GM12878 (cell line): ENCODE measurements at regions of chr6 and their contacts with region 1.

Region 1: DNA sequence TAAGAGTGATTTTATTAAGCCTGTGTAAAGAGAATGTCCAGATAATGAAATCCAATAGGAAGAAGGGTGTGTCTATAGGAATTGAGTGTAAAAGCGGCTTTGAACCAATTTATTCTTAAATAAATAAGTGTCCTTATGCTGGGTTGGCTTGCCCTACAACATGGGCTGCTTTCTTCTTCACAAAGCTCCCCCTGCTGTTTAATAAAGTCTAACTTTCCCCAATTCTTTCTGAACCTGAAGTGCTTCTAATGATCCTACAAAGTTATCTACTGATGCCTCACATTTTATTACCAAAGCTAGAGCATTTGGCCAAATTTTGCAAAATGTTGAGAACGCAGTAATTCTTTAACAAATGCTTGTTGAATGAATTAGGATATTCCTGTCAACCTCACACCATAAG is 36.3 kb upstream of the SIRT5 start:
- DNase-seq: no peak
- ATAC-seq: peak; percentile 80
- H3K4me3 ChIP-seq: no peak overlapping the region
- H3K27ac ChIP-seq: no peak overlapping the region
- H3K4me1 ChIP-seq: no peaks in the 10 kb centered on the region
- H3K27me3 ChIP-seq: no peaks in the 10 kb centered on the region
- CTCF ChIP-seq: peak; percentile 27 to 49 (median 36); a peak in 4 of 6 replicates
- EP300 ChIP-seq: no peak
- POLR2A ChIP-seq: no peak
- RAD21 ChIP-seq: peak; percentile 61

Region 2: DNA sequence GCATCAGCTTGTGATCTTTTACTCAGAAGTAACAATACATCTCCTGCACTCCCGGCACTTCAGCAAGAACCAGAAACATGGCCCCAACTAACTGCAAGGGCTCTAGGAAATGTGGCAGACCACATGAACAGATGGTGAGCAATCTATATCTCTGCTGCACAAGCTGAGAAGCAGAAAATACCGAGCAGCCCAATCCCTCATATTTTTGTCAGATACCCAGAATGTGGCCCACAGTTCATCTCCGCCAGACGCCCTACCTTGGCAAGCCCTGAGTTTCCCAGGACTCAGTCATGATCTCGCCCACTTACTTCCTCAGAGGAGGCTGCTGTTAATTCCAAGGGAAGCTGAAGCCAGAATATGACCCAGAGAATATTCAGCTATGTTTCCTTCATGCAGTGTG is 884.6 kb before region 1 on chr6:
- CTCF ChIA-PET with region 1: no interaction called
- POLR2A ChIA-PET with region 1: no interaction called
- RAD21 ChIA-PET with region 1: no interaction called
- SMC1A ChIA-PET with region 1: no interaction called
- in situ Hi-C with region 1: loop called (anchors 25 kb)
- intact Hi-C with region 1: no loop called
- DNase-seq: no peak
- ATAC-seq: no peak
- H3K4me3 ChIP-seq: no peak overlapping the region
- H3K27ac ChIP-seq: no peak overlapping the region
- H3K4me1 ChIP-seq: no peaks in the 10 kb centered on the region
- H3K27me3 ChIP-seq: no peaks in the 10 kb centered on the region; a peak in 1 of 4 replicates
- CTCF ChIP-seq: no peak
- EP300 ChIP-seq: no peak
- POLR2A ChIP-seq: no peak
- RAD21 ChIP-seq: no peak

Region 3: DNA sequence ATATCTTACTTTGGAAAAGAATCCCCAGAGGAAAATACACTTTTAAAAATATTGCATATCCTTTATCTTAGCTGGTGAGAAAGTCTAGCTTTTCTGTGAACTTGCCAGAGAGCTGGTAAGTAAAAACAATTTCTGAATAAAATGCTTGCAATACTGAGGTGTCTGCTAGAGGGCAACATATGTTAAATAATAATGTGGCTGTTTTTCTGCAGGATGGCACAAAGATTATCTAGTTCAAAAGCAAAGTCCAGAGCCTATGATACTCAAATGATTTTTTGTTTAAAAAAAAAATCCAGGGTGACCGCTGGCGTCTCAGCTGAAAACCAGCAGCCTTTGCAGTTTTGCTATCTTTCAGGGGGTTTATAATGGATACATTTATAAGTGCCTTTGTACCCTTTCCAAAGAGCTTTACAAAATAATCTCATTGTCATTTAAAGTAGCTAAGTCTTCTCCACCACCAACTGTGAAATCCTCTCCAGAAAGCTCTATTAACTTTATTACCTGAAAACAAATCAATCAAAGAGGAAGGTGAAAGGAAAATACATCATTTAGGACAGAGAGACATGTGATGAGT is 626.6 kb before region 1 on chr6:
- CTCF ChIA-PET with region 1: interaction called, 3 read pairs
- POLR2A ChIA-PET with region 1: no interaction called
- RAD21 ChIA-PET with region 1: no interaction called
- SMC1A ChIA-PET with region 1: no interaction called
- in situ Hi-C with region 1: loop called (anchors 25 kb)
- intact Hi-C with region 1: no loop called
- DNase-seq: no peak
- ATAC-seq: no peak
- H3K4me3 ChIP-seq: no peak overlapping the region
- H3K27ac ChIP-seq: no peak overlapping the region
- H3K4me1 ChIP-seq: no peaks in the 10 kb centered on the region
- H3K27me3 ChIP-seq: no peaks in the 10 kb centered on the region
- CTCF ChIP-seq: peak; percentile 31 to 51 (median 48); a peak in 5 of 6 replicates
- EP300 ChIP-seq: no peak
- POLR2A ChIP-seq: no peak
- RAD21 ChIP-seq: peak; percentile 77

Region 4: GRCh38 chr6:13355043-13355951 is 182.8 kb before region 1 on chr6:
- CTCF ChIA-PET with region 1: interaction called, 6 read pairs
- POLR2A ChIA-PET with region 1: no interaction called
- RAD21 ChIA-PET with region 1: interaction called, 4 read pairs
- SMC1A ChIA-PET with region 1: interaction called, 19 read pairs
- in situ Hi-C with region 1: no loop called
- intact Hi-C with region 1: no loop called
- DNase-seq: peak; percentile 66
- ATAC-seq: peak; percentile 79
- H3K4me3 ChIP-seq: peak overlapping the region; percentile 58
- H3K27ac ChIP-seq: peak overlapping the region; percentile 94
- H3K4me1 ChIP-seq: peaks cover 36% of the 10 kb centered on the region
- H3K27me3 ChIP-seq: no peaks in the 10 kb centered on the region
- CTCF ChIP-seq: no peak
- EP300 ChIP-seq: 0 out of 4 replicates have a peak, but pooled peaks of 1 of the 2 experiments have one; percentile 25
- POLR2A ChIP-seq: no peak
- RAD21 ChIP-seq: no peak

Region 5: DNA sequence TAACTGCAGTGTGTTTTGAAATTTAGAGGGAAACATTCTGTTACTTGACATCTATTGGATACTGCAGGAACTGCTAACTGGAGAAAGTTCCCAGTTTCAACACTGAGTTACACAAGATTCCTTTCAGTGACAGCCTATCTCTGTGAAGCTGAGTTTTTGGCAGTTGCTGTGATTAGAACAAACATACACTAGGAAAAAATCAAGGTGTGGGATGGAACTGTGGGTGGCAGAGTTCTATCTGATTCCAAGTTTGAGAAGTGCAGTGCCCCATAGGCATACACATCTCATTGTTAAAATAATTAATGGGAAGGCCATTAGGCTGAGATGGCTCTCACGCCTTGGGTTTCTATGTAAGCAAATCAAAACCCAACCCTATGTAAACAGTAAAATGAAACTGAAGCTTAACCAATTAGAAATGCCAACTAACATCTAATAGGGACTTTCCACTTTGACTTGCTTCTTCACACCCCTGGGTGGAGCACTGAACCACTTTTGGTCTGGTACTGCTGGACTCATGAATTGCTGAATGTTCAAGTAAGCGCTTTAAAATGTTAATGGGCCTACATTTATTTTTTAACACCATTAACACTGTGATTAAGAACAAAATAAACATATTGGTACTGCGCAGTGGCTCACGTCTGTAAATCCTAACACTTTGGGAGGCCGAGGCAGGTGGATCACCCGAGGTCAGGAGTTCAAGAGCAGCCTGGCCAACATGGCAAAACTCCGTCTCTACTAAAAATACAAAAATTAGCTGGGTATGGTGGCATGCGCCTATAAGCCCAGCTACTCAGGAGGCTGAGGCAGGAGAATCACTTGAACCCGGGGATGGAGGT is 154.5 kb before region 1 on chr6:
- CTCF ChIA-PET with region 1: interaction called, 31 read pairs
- POLR2A ChIA-PET with region 1: interaction called, 7 read pairs
- RAD21 ChIA-PET with region 1: interaction called, 11 read pairs
- SMC1A ChIA-PET with region 1: interaction called, 38 read pairs
- in situ Hi-C with region 1: no loop called
- intact Hi-C with region 1: no loop called
- DNase-seq: peak; percentile 91
- ATAC-seq: peak; percentile 98
- H3K4me3 ChIP-seq: no peak overlapping the region
- H3K27ac ChIP-seq: peak overlapping the region; percentile 93
- H3K4me1 ChIP-seq: peaks cover 45% of the 10 kb centered on the region
- H3K27me3 ChIP-seq: no peaks in the 10 kb centered on the region
- CTCF ChIP-seq: peak; percentile 40 to 67 (median 48); a peak in 5 of 6 replicates
- EP300 ChIP-seq: peak in 1 of 2 experiments; percentile 54; a peak in 2 of 4 replicates
- POLR2A ChIP-seq: no peak
- RAD21 ChIP-seq: peak; percentile 83

Region 6: DNA sequence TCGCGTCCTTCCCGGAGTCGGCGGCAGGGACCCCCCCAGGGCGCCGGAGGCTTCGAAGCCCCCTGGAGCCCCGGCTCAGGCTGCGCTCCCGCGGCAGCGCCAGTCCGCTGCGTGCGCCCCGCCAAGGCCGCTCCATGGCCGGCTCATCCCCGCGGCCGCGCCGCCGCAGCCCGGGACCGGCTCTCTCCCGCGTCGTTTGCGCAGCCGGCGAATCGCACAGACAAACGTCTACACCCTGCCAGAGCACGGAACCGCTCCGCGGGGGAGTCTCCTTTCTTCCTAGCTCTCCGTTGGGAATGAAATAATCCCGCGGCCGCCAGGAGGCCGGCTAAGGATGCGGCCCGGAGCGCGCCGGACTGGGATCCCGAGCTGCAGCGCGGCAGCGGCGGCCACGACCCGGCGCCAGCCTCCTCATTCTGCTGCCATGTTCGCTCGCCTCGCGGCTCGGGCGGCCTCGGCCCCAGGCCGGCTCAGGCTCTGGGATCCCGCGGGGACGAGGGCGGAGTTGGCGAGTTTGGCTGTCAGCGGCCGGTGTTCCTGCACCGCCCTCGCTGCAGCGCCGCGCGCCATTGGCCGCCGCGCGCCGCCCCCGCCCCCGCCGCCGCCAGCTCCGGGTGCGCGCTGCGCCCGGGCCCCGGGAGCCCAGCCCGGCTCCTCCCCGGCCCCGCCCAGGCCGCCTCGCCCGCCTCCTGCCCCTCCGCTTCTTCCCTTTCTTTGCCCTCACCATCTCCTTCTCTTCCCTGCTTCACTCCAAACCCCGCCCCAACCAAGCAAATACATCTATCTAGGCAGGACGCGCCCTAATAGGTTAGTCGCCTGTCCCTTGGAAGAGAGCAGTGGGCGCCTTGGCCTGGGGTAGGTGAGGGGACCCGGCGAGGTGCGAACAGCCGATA is 50.7 kb before region 1 on chr6 and contains the start of gene GFOD1:
- CTCF ChIA-PET with region 1: interaction called, 9 read pairs
- POLR2A ChIA-PET with region 1: no interaction called
- RAD21 ChIA-PET with region 1: interaction called, 6 read pairs
- SMC1A ChIA-PET with region 1: interaction called, 18 read pairs
- in situ Hi-C with region 1: no loop called
- intact Hi-C with region 1: no loop called
- DNase-seq: no peak
- ATAC-seq: peak; percentile 80
- H3K4me3 ChIP-seq: peak within 1 kb of the TSS; percentile 100
- H3K27ac ChIP-seq: peak within 1 kb of the TSS; percentile 69
- H3K4me1 ChIP-seq: peaks cover 15% of the 10 kb centered on the region
- H3K27me3 ChIP-seq: no peaks in the 10 kb centered on the region
- CTCF ChIP-seq: no peak
- EP300 ChIP-seq: no peak
- POLR2A ChIP-seq: peak; percentile 86
- RAD21 ChIP-seq: no peak
- polyA plus RNA-seq, gene GFOD1: 6.5 to 7.9 TPM

Region 7: GRCh38 chr6:13586603-13587542 is 48.8 kb after region 1 on chr6:
- CTCF ChIA-PET with region 1: no interaction called
- POLR2A ChIA-PET with region 1: no interaction called
- RAD21 ChIA-PET with region 1: no interaction called
- SMC1A ChIA-PET with region 1: no interaction called
- in situ Hi-C with region 1: no loop called
- intact Hi-C with region 1: no loop called
- DNase-seq: no peak
- ATAC-seq: no peak
- H3K4me3 ChIP-seq: no peak overlapping the region
- H3K27ac ChIP-seq: no peak overlapping the region
- H3K4me1 ChIP-seq: no peaks in the 10 kb centered on the region
- H3K27me3 ChIP-seq: no peaks in the 10 kb centered on the region
- CTCF ChIP-seq: no peak
- EP300 ChIP-seq: no peak
- POLR2A ChIP-seq: no peak
- RAD21 ChIP-seq: no peak